ENCODE measurements at regions of chr12 and their contacts with region 1.

Region 1: GRCh38 chr12:6752921-6753771 is at the start of gene MLF2:
- DNase-seq: peak; percentile 100
- H3K4me3 Mint-ChIP-seq: peak within 1 kb of the TSS; percentile 96
- H3K27ac Mint-ChIP-seq: peak within 1 kb of the TSS; percentile 98
- H3K4me1 Mint-ChIP-seq: peaks cover 26% of the 10 kb centered on the region
- H3K27me3 Mint-ChIP-seq: peaks cover 1% of the 10 kb centered on the region
- total RNA-seq, gene MLF2: 163 and 180 TPM in 2 replicates

Region 2: DNA sequence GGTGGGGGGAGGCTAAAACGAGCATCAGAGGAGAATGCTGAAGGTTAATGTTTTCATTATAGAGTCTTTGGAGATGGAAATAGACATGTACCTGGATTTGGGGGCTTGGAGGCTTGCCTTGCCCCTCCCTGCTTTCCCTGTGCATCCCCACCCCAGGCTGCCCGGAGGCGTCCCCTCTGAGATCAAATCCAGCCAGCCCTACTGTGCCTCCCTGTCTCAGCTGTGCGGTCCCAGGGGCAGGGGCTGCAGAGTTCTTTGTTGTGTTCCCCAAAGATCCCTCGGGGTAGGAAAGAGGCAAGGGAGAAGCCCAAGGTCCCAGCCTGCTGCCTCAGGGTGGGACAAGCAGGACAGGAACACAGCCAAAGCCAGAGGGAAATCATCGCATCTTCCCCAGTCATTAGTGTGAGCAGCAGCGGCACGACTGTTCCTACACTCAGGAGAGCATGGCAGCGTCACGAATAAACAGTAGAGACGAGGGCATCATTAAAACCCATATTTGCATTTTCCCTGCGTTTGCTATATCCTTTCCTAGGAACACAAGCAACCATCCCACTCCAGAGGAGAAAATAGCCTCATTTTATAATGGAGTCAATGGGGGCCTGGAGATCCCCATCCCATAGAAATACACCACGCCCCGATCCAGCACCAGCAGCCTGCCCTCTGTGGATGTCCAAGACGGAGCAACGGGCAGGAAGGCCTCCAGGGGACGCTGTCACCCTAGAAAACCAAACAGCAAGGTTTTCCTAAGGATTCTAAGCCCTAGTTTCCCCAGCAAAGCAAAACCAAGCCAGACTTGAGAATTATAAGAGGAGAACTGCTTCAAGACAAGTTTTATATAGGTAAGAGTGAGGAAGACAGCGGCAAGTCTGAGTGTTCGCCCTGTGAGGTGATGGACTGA is 840.5 kb before region 1 on chr12:
- intact Hi-C with region 1: no loop called
- DNase-seq: no peak
- H3K4me3 Mint-ChIP-seq: no peak overlapping the region
- H3K27ac Mint-ChIP-seq: no peak overlapping the region
- H3K4me1 Mint-ChIP-seq: no peaks in the 10 kb centered on the region
- H3K27me3 Mint-ChIP-seq: no peaks in the 10 kb centered on the region

Region 3: GRCh38 chr12:6016756-6017155 is 736.4 kb before region 1 on chr12:
- intact Hi-C with region 1: no loop called
- DNase-seq: no peak
- H3K4me3 Mint-ChIP-seq: no peak overlapping the region
- H3K27ac Mint-ChIP-seq: no peak overlapping the region
- H3K4me1 Mint-ChIP-seq: no peaks in the 10 kb centered on the region
- H3K27me3 Mint-ChIP-seq: peaks cover 3% of the 10 kb centered on the region

Region 4: GRCh38 chr12:6688999-6689882 is 63.9 kb before region 1 on chr12 and contains the start of gene ZNF384:
- intact Hi-C with region 1: loop called (anchors 1 kb)
- DNase-seq: peak; percentile 98
- H3K4me3 Mint-ChIP-seq: peak within 1 kb of the TSS; percentile 96
- H3K27ac Mint-ChIP-seq: peak within 1 kb of the TSS; percentile 93
- H3K4me1 Mint-ChIP-seq: peaks cover 38% of the 10 kb centered on the region
- H3K27me3 Mint-ChIP-seq: no peaks in the 10 kb centered on the region
- total RNA-seq, gene ZNF384: 83.6 and 84.4 TPM in 2 replicates

Region 5: DNA sequence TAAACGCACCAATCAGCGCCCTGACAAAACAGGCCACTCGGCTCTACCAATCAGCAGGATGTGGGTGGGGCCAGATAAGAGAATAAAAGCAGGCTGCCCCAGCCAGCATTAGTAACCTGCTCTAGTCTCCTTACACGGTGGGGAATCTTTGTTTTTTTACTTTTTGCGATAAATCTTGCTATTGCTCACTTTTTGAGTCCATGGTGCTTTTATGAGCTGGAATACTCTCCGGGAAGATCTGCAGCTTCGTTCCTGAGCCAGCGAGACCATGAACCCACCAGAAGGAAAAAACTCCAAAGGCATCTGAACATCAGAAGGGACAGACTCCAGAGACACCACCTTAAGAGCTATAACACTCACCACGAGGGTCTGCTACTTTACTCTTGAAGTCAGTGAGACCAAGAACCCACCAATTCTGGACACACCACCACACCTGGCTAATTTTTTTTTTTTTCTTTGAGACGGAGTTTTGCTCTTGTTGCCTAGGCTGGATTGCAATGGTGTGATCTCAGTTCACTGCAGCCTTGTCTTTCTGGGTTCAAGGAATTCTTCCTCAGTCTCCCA is 36.2 kb before region 1 on chr12:
- intact Hi-C with region 1: no loop called
- DNase-seq: no peak
- H3K4me3 Mint-ChIP-seq: no peak overlapping the region
- H3K27ac Mint-ChIP-seq: no peak overlapping the region
- H3K4me1 Mint-ChIP-seq: no peaks in the 10 kb centered on the region
- H3K27me3 Mint-ChIP-seq: peaks cover 6% of the 10 kb centered on the region

Region 6: GRCh38 chr12:6735448-6736191 is 17.5 kb before region 1 on chr12:
- intact Hi-C with region 1: no loop called
- DNase-seq: peak; percentile 80
- H3K4me3 Mint-ChIP-seq: no peak overlapping the region
- H3K27ac Mint-ChIP-seq: no peak overlapping the region
- H3K4me1 Mint-ChIP-seq: peaks cover 5% of the 10 kb centered on the region
- H3K27me3 Mint-ChIP-seq: no peaks in the 10 kb centered on the region

Region 7: DNA sequence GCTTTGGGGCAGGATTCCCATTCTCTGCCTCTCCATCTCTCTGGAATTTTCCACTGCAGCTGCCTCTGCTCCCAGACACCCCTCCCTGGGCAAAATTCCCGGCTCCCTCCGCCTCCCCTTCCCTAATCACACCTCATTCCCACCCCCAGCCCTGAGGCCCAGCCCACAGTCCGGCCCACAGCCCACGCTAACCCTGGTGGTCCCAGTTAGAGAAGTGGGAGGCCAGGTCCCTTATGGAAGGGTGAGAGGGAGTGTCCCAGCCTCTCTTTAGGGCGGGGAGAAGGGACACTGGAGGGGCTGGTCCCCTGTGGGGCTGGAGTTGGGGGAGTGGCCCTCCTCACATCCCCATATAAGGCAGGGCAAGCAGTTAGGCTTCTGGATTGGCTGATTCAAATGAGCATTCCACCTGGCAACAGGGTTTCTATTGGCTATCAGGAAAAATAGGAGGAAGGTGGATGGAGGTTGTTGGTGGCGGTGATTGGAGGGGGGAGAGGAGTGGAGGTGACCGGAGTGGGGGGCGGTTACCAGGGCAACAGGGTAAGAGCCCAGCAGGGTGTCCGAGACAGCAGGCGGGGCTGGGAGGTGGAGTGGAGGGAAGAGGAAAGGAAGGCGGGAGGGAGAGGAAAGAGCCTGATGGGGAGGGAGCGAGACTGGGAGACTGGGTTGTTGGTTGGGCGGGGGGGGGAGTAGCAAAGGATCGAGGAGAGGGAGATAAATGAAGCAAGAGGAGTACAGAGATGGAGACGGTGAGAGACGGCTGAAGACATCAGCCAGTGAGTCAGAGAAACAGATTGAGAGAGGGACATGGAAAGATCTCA is 11.1 kb after region 1 on chr12:
- intact Hi-C with region 1: loop called (anchors 1 kb)
- DNase-seq: peak; percentile 91
- H3K4me3 Mint-ChIP-seq: peak overlapping the region; percentile 75
- H3K27ac Mint-ChIP-seq: peak overlapping the region; percentile 70
- H3K4me1 Mint-ChIP-seq: peaks cover 36% of the 10 kb centered on the region
- H3K27me3 Mint-ChIP-seq: peaks cover 7% of the 10 kb centered on the region

Region 8: GRCh38 chr12:6792522-6793201 is 39.5 kb after region 1 on chr12:
- intact Hi-C with region 1: loop called (anchors 1 kb)
- DNase-seq: peak; percentile 86
- H3K4me3 Mint-ChIP-seq: peak overlapping the region; percentile 97
- H3K27ac Mint-ChIP-seq: peak overlapping the region; percentile 93
- H3K4me1 Mint-ChIP-seq: peaks cover 62% of the 10 kb centered on the region
- H3K27me3 Mint-ChIP-seq: no peaks in the 10 kb centered on the region

Region 9: DNA sequence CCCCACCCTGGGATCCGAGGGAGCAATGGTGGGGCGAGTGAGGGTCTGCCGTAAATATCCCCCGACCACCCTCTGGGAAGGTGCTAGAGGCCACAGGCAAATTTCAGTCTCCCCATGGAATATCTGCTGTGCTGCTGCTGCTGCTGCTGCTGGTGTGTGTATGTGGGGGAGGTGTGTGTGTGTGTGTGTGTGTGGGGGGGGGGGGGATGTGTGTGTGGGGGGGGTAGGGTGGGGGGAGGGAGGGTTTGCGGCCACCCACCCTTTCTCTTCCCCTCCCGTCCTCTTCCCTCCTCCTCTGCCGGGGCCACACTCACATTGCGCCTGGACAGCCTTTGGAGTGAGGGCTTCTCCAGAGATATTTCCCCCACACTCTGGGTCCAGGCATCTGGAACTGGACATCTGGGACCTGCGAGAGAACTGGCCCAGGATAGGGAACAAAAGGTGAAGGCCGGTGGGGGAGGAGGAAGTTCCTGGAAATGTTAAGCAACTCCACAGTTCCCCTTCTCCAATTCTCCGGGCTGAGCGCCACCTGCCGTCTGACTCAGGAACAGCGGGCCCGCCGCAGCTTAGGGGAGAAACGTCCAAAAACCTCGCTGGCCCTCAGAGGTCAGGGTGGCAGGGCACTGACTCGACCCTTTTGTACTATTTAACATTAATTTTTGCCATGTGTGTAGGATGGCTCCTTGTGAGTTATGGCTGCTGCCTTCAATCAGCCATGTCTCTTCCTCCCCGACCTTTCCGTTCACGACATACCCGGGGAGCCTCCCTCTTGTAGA is 355.8 kb after region 1 on chr12 and contains the start of gene C1RL:
- intact Hi-C with region 1: loop called (anchors 1 kb)
- DNase-seq: peak; percentile 96
- H3K4me3 Mint-ChIP-seq: peak within 1 kb of the TSS; percentile 95
- H3K27ac Mint-ChIP-seq: peak within 1 kb of the TSS; percentile 92
- H3K4me1 Mint-ChIP-seq: peaks cover 42% of the 10 kb centered on the region
- H3K27me3 Mint-ChIP-seq: no peaks in the 10 kb centered on the region
- total RNA-seq, gene C1RL: 19.8 and 23.0 TPM in 2 replicates

Measured in activated CD4-positive, alpha-beta T cell treated with anti-CD3 and anti-CD28 coated beads, Interleukin-2, amount 10 ng/mL, durations not matched to agents 24 days and 14 days (primary cell).